ENCODE measurements at regions of chrX and their contacts with region 1.

Region 1: DNA sequence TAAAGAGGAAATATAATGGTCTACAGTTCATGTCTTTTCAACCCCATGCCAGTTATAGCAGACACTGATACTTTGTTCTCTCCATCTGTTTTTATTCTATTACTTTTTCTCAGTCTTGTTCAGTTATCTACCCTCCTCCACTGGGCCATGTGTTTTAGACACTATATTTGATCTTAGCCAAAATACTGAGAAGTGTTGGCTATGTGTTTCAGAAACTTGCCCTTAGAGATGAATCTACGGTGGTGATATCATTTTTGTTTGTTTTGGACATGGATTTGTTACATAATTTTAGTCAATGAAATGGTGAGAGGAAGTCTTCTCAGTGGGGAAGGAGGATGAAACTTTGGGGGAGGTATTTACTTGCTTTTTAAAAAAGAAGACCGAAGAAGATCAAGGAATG is 211.5 kb upstream of the DDX53 start:
- DNase-seq: no peak
- H3K4me3 ChIP-seq: no peak overlapping the region
- H3K27ac ChIP-seq: no peak overlapping the region
- H3K4me1 ChIP-seq: no peaks in the 10 kb centered on the region
- H3K27me3 ChIP-seq: no peaks in the 10 kb centered on the region
- CTCF ChIP-seq: no peak
- POLR2A ChIP-seq: no peak

Region 2: DNA sequence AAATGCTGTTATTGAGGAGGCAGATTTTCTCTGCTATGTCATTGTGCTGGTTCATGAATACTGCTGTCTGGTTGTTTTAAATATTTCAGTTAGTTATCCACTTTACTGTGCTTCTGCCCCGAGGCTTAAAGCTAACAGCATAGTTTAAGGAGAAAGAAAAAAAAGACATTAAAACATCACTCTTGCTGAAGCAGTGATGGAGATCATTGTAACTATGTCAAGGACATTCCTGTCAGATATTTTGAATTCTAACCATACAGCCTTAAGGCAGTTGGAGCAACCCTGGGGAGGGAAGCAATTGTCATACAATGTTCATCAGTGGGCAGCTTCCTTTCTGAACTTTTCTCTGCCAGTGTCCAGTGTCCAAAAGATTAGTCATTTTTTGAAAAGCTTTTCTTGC is 12.6 kb after region 1 on chrX:
- CTCF ChIA-PET with region 1: no interaction called
- POLR2A ChIA-PET with region 1: no interaction called
- dilution Hi-C with region 1: no loop called
- intact Hi-C with region 1: no loop called
- DNase-seq: no peak
- H3K4me3 ChIP-seq: no peak overlapping the region
- H3K27ac ChIP-seq: no peak overlapping the region
- H3K4me1 ChIP-seq: peaks cover 4% of the 10 kb centered on the region
- H3K27me3 ChIP-seq: no peaks in the 10 kb centered on the region
- CTCF ChIP-seq: no peak
- POLR2A ChIP-seq: no peak

Region 3: GRCh38 chrX:23008431-23009099 is 220.3 kb after region 1 on chrX:
- CTCF ChIA-PET with region 1: no interaction called
- POLR2A ChIA-PET with region 1: no interaction called
- dilution Hi-C with region 1: no loop called
- intact Hi-C with region 1: loop called (anchors 5 kb)
- DNase-seq: peak; percentile 12
- H3K4me3 ChIP-seq: no peak overlapping the region
- H3K27ac ChIP-seq: no peak overlapping the region
- H3K4me1 ChIP-seq: no peaks in the 10 kb centered on the region
- H3K27me3 ChIP-seq: no peaks in the 10 kb centered on the region
- CTCF ChIP-seq: peak; percentile 6 to 13
- POLR2A ChIP-seq: no peak

Region 4: GRCh38 chrX:23838953-23839352 is 1050.7 kb after region 1 on chrX:
- CTCF ChIA-PET with region 1: no interaction called
- POLR2A ChIA-PET with region 1: no interaction called
- dilution Hi-C with region 1: no loop called
- intact Hi-C with region 1: no loop called
- DNase-seq: no peak
- H3K4me3 ChIP-seq: no peak overlapping the region
- H3K27ac ChIP-seq: no peak overlapping the region
- H3K4me1 ChIP-seq: no peaks in the 10 kb centered on the region
- H3K27me3 ChIP-seq: no peaks in the 10 kb centered on the region
- CTCF ChIP-seq: no peak
- POLR2A ChIP-seq: no peak